Activated B cell treated with CpG ODN at 0.5 μM for 24 hours (primary cell): ENCODE measurements at regions of chr18 and their contacts with region 1.

Region 1: DNA sequence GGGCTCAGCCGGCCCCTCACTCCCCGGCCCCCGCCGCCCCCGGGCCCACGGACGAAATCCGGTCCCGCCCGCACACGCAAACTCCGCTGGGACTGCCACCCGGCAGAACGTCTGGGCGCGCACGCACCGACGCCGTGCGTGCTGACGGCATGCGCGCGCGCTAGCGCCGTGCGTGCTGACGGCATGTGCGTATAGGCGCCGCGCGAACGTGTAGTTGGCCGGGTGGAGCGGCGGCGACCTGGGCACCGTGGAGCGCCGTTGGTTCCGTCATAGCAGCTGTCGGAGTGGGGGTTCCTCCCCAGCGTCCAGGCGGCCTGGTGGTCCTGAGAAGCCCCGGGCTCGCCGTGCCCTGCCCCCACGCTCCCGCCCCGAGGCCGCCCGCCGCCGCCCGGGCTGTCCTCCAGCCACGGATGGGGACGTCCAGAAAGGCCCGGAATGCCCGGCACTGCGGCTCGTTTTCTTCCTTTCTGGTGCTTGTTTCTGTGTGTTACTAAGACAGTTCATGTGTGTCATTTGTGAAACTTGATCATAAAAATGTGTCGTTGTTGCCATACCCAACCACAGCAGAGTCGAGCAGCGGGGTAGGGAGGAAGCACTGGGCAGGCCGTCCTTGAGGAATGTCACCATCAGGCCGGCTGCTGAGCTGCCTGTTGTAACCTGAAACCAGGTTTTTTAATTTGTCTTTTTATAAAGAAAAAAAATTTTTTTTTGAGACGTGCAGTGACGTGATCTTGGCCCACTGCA is at the start of gene TXNL4A:
- DNase-seq: peak; percentile 87
- ATAC-seq: peak; percentile 92
- H3K4me3 Mint-ChIP-seq: peak within 1 kb of the TSS; percentile 91
- H3K27ac Mint-ChIP-seq: peak within 1 kb of the TSS; percentile 92
- H3K4me1 Mint-ChIP-seq: peaks cover 34% of the 10 kb centered on the region
- H3K27me3 Mint-ChIP-seq: no peaks in the 10 kb centered on the region
- CTCF ChIP-seq: no peak
- total RNA-seq, gene TXNL4A: 94.7 and 96.9 TPM in 2 replicates

Region 2: DNA sequence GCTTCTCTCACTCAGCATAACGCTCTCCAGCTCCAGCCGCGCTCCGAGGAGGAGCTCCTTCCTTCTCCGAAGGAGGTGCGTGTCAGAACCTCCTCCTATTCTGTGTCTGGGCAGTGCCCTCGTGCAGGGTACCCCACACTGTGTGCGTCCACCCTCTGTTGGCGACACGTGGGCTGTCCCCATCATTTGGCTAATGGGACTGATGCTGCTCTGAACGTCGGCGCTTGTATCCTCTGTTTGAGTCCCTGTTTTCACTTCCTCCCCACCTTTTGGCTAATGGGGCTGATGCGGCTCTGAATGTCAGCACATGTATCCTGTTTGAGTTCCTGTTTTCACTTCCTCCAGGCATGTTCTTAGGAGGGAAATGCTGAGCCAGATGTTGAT is 168.7 kb before region 1 on chr18:
- CTCF ChIA-PET with region 1: no interaction called
- POLR2A ChIA-PET with region 1: interaction called, 3 read pairs
- intact Hi-C with region 1: loop called (anchors 1 kb)
- DNase-seq: peak; percentile 42
- ATAC-seq: peak; percentile 94
- H3K4me3 Mint-ChIP-seq: peak overlapping the region; percentile 73
- H3K27ac Mint-ChIP-seq: peak overlapping the region; percentile 84
- H3K4me1 Mint-ChIP-seq: peaks cover 36% of the 10 kb centered on the region
- H3K27me3 Mint-ChIP-seq: peaks cover 3% of the 10 kb centered on the region
- CTCF ChIP-seq: no peak

Region 3: DNA sequence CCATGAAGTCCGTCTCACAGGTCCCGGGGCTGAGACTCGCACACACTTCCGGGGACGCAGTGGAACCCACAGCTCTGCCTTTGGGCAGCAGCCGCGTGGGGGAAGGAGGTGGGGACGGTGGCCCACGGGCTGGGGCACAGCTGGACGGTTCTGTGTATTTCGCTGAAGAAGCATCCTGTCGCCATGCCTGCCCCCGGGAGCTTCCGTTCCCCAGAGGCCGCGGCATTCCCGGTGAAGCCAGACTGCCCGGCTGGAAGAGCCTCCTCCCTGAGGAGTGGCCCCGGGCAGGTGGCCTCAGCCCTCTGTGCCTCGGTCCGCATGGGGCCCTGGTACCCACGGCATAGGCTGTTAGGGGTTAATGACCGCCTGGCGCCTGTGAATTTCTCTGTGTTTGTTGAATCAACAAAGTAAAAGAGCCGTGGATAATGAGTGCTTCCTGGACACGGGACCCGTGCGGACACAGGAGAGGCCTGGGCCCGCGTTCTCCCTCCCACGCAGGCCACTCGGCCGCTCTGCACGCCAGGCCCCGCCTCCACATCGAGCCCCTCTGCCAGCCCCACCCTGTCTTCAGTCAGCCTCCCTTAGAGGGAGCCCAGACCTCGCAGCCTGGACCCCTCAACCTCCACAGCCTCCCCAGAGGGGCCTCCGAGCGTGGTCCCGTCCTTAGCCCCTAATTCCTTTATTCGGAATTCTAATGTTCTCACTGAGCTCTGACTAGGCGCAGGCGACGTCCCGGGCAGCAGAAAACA is 139.9 kb before region 1 on chr18:
- CTCF ChIA-PET with region 1: no interaction called
- POLR2A ChIA-PET with region 1: no interaction called
- intact Hi-C with region 1: no loop called
- DNase-seq: no peak
- ATAC-seq: no peak
- H3K4me3 Mint-ChIP-seq: no peak overlapping the region
- H3K27ac Mint-ChIP-seq: no peak overlapping the region
- H3K4me1 Mint-ChIP-seq: peaks cover 6% of the 10 kb centered on the region
- H3K27me3 Mint-ChIP-seq: no peaks in the 10 kb centered on the region
- CTCF ChIP-seq: no peak

Region 4: DNA sequence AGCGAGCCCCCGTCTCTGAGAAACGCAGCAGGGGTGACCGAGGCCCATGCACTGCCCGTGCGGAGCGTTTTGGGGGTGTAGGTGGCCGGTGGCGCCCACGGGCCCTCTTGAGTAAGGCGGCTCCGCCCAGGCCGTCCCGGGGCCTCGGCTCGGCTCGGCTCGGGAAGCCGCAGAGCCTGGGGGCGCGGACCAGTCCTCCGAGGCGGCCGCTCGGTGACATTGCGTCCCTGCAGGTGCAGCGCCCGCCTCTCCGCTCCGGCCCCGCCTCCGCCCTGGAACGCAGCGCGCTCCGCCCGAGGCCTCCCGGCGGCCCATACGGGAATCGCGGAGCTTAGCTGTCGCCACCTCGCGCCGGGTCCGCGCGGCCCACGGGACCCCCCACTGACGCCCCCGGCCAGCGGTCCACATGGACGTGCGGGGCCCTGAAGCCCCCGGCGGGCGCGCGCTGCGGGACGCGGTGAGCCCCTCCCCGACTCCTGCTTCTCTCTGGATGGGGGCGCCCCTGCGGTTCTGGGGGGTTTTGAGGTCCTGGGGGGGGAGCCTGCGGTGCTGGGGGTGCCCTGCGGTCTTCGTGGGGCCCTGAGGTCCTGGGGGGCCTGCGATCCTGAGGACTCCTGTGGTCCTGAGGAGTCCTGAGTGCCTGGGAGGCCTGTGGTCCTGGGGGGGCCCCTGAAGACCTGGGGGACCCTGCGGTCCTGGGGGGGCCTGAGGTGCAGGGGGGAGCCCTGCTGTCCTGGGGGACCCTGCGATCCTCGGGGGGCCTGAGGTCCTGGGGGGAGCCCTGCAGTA is 24.1 kb before region 1 on chr18 and contains the start of gene HSBP1L1:
- CTCF ChIA-PET with region 1: no interaction called
- POLR2A ChIA-PET with region 1: interaction called, 6 read pairs
- intact Hi-C with region 1: loop called (anchors 1 kb)
- DNase-seq: peak; percentile 56
- ATAC-seq: peak; percentile 83
- H3K4me3 Mint-ChIP-seq: peak within 1 kb of the TSS; percentile 74
- H3K27ac Mint-ChIP-seq: no peak within 1 kb of the TSS
- H3K4me1 Mint-ChIP-seq: peaks cover 37% of the 10 kb centered on the region
- H3K27me3 Mint-ChIP-seq: peaks cover 2% of the 10 kb centered on the region
- CTCF ChIP-seq: no peak
- total RNA-seq, gene HSBP1L1: 0.98 and 2.5 TPM in 2 replicates

Region 5: DNA sequence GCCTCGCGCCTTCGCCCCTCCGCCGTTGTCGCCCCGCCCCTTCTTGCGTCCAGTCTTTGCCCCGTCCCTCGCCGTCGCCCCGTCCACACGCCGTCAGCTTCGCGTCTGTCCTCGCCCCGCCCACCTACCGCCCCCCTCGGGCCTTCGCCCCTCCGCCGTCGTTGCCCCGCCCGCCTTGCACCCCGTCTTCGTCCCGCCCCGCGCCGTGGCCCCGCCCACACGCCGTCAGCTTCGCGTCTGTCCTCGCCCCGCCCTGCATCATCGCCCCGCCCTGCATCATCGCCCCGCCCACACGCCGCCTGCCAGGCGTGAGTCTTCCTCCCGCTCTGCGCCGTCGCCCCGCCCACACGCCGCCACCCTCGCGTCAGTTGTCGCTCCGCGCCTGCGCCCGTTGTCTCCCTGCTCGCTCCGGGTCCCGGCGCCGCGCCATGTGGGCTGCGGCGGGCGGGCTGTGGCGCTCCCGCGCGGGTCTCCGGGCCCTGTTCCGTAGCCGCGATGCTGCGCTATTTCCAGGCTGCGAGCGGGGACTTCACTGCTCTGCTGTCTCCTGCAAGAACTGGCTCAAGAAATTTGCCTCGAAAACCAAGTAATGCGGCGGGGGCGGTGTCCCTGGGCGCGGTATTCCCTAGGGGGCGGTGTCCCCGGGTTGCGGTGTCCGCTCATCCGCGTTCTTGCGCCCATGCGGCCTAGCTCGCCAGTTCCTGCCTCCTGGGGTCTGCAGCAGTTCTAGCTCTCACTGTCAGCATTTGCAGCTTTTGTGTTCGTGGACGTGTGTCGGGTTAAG is 45.6 kb after region 1 on chr18 and contains the start of gene RBFA:
- CTCF ChIA-PET with region 1: no interaction called
- POLR2A ChIA-PET with region 1: interaction called, 48 read pairs
- intact Hi-C with region 1: loop called (anchors 1 kb)
- DNase-seq: peak; percentile 99
- ATAC-seq: peak; percentile 73
- H3K4me3 Mint-ChIP-seq: peak within 1 kb of the TSS; percentile 90
- H3K27ac Mint-ChIP-seq: peak within 1 kb of the TSS; percentile 93
- H3K4me1 Mint-ChIP-seq: peaks cover 24% of the 10 kb centered on the region
- H3K27me3 Mint-ChIP-seq: no peaks in the 10 kb centered on the region
- CTCF ChIP-seq: no peak
- total RNA-seq, gene RBFA: 21.6 and 23.3 TPM in 2 replicates

Region 6: GRCh38 chr18:80108728-80109675 is 120.4 kb after region 1 on chr18 and contains the start of gene ADNP2:
- CTCF ChIA-PET with region 1: no interaction called
- POLR2A ChIA-PET with region 1: interaction called, 3 read pairs
- intact Hi-C with region 1: loop called (anchors 1 kb)
- DNase-seq: peak; percentile 63
- ATAC-seq: peak; percentile 66
- H3K4me3 Mint-ChIP-seq: peak within 1 kb of the TSS; percentile 84
- H3K27ac Mint-ChIP-seq: peak within 1 kb of the TSS; percentile 80
- H3K4me1 Mint-ChIP-seq: peaks cover 45% of the 10 kb centered on the region
- H3K27me3 Mint-ChIP-seq: no peaks in the 10 kb centered on the region
- CTCF ChIP-seq: no peak
- total RNA-seq, gene ADNP2: 19.2 and 19.7 TPM in 2 replicates

Region 7: DNA sequence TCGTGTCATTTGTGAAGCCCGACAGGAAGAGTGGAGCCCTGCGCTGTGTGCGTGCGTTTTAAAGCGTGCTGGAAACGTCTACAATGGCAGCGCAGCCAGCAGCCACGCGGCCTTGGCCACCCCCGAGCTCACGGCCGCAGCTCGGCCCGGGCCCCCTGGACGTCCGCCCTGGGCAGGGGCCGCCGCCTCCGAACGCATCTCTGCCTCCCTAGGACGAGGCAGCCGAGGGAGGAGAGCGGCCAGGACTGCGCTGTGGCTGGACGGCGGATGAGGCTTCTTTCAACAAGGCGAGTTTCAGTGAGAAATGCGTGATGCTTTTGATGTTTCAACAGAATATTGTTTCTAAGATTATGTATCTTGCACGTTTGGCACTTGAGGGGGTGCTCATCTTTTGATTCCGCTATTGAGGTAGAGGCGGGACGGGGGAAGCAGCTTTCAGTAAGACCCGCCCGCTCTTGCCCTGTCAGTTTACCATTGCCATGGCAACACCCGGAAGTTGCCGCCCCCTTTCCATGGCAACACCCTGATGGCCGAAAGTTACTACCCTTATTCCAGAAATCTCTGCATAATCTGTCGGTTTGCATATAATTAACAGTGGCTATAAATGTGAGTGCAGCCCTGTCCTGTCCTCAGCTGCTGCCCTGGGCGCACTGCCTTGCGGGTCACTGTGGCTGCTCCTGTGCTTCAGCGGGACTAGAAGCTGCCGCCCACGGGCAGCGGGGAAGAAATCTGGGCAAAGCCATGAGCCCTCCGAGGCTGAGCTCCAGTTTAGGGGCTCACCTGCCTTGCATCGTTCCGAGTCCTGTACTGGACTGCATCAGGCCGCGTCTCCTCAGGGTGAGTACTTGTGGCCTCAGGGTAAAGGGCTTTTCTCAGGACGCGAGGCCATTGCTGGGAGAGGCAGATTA is 159.0 kb after region 1 on chr18:
- CTCF ChIA-PET with region 1: no interaction called
- POLR2A ChIA-PET with region 1: no interaction called
- intact Hi-C with region 1: loop called (anchors 2 kb)
- DNase-seq: peak; percentile 74
- ATAC-seq: peak; percentile 88
- H3K4me3 Mint-ChIP-seq: peak overlapping the region; percentile 90
- H3K27ac Mint-ChIP-seq: peak overlapping the region; percentile 69
- H3K4me1 Mint-ChIP-seq: peaks cover 20% of the 10 kb centered on the region
- H3K27me3 Mint-ChIP-seq: no peaks in the 10 kb centered on the region
- CTCF ChIP-seq: no peak

Region 8: GRCh38 chr18:80157708-80158343 is 169.2 kb after region 1 on chr18:
- CTCF ChIA-PET with region 1: no interaction called
- POLR2A ChIA-PET with region 1: no interaction called
- intact Hi-C with region 1: loop called (anchors 1 kb)
- DNase-seq: peak; percentile 54
- ATAC-seq: peak; percentile 75
- H3K4me3 Mint-ChIP-seq: no peak overlapping the region
- H3K27ac Mint-ChIP-seq: no peak overlapping the region
- H3K4me1 Mint-ChIP-seq: peaks cover 9% of the 10 kb centered on the region
- H3K27me3 Mint-ChIP-seq: peaks cover 1% of the 10 kb centered on the region
- CTCF ChIP-seq: peak; percentile 92